CD4-positive, alpha-beta memory T cell (primary cell): ENCODE measurements at regions of chrX and their contacts with region 1.

Region 1: GRCh38 chrX:40175511-40176350 is 78.0 kb upstream of the BCOR start:
- DNase-seq: peak; percentile 81 to 85 (median 84)
- H3K4me3 ChIP-seq: peak overlapping the region; percentile 23 to 67
- H3K4me3 Mint-ChIP-seq: peak overlapping the region; percentile 84 to 94 (median 92)
- H3K27ac ChIP-seq: peak overlapping the region; percentile 84
- H3K27ac Mint-ChIP-seq: peak overlapping the region; percentile 97 to 100 (median 98)
- H3K4me1 ChIP-seq: peaks cover 29% of the 10 kb centered on the region
- H3K4me1 Mint-ChIP-seq: peaks cover 17 to 51% (median 24%) of the 10 kb centered on the region in 4 donors
- H3K27me3 ChIP-seq: no peaks in the 10 kb centered on the region
- H3K27me3 Mint-ChIP-seq: no peaks in the 10 kb centered on the region

Region 2: GRCh38 chrX:39772057-39772832 is 403.5 kb before region 1 on chrX:
- CTCF ChIA-PET with region 1: no interaction called
- POLR2A ChIA-PET with region 1: interaction called, 24 read pairs
- intact Hi-C with region 1: no loop called
- DNase-seq: peak; percentile 33 to 74 (median 41)
- H3K4me3 ChIP-seq: no peak overlapping the region
- H3K4me3 Mint-ChIP-seq: peak overlapping the region in 7 of 8 donors; percentile 46 to 85 (median 70)
- H3K27ac ChIP-seq: peak overlapping the region; percentile 48
- H3K27ac Mint-ChIP-seq: peak overlapping the region; percentile 83 to 95 (median 90)
- H3K4me1 ChIP-seq: peaks cover 64% of the 10 kb centered on the region
- H3K4me1 Mint-ChIP-seq: peaks cover 31 to 59% (median 42%) of the 10 kb centered on the region in 4 donors
- H3K27me3 ChIP-seq: no peaks in the 10 kb centered on the region
- H3K27me3 Mint-ChIP-seq: no peaks in the 10 kb centered on the region

Region 3: DNA sequence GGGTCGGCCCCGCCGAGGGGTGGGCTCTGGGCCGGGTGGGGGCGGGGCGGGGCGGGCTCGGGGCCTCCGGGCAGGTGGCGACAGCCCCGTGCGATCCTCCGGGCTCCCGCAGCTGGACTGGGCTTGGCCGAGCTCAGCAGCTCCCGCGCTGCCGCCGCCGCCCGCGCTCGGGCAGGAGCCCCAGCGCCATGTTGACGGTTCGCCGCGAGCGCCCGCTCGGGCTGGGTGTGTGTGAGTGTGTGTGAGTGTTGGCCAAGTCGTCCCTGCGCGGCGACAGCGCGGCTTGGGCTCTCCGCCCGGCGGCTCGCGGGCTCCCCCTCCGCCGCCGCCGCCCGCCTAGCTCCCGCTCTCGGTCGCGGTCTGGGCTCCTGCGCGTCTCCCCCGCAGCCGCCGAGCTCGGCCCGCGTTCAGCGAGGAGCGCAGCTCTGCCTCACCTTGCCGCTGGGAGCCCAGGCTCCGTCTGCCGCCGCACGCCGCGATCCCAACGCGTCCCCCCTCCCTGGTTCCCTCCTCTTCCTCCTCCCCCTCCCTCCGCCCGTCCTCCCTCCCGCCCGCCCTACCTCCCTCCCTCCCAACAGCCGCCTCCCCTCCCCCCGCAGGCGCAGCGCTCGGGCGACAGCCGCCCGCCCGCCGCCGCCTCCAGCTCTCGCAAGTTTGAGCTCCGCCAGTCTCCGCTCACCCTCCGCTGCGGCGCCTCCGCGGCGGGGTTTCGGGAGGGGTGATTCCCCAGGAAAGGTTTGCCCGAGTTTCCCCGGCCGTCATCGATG is 78.1 kb before region 1 on chrX and contains the start of gene BCOR:
- CTCF ChIA-PET with region 1: interaction called, 3 read pairs
- POLR2A ChIA-PET with region 1: interaction called, 323 read pairs
- intact Hi-C with region 1: loop called (anchors 1 kb)
- DNase-seq: peak; percentile 69 to 75 (median 72)
- H3K4me3 ChIP-seq: peak within 1 kb of the TSS in 1 of 2 donors; percentile 58
- H3K4me3 Mint-ChIP-seq: peak within 1 kb of the TSS; percentile 89 to 95 (median 91)
- H3K27ac ChIP-seq: peak within 1 kb of the TSS; percentile 63
- H3K27ac Mint-ChIP-seq: peak within 1 kb of the TSS; percentile 79 to 96 (median 92)
- H3K4me1 ChIP-seq: peaks cover 22% of the 10 kb centered on the region
- H3K4me1 Mint-ChIP-seq: peaks cover 9 to 38% (median 23%) of the 10 kb centered on the region in 4 donors
- H3K27me3 ChIP-seq: no peaks in the 10 kb centered on the region
- H3K27me3 Mint-ChIP-seq: no peaks in the 10 kb centered on the region
- total RNA-seq, gene BCOR: 47.1 to 48.7 TPM

Region 4: GRCh38 chrX:40153335-40154249 is 22.1 kb before region 1 on chrX:
- CTCF ChIA-PET with region 1: interaction called, 3 read pairs
- POLR2A ChIA-PET with region 1: interaction called, 25 read pairs
- intact Hi-C with region 1: no loop called
- DNase-seq: peak in 4 of 5 donors; percentile 44 to 83 (median 54)
- H3K4me3 ChIP-seq: peak overlapping the region; percentile 3 to 50
- H3K4me3 Mint-ChIP-seq: peak overlapping the region; percentile 81 to 92 (median 84)
- H3K27ac ChIP-seq: no peak overlapping the region
- H3K27ac Mint-ChIP-seq: peak overlapping the region; percentile 12 to 79 (median 60)
- H3K4me1 ChIP-seq: peaks cover under 1% of the 10 kb centered on the region
- H3K4me1 Mint-ChIP-seq: peaks cover 1 to 18% (median 11%) of the 10 kb centered on the region in 4 donors
- H3K27me3 ChIP-seq: no peaks in the 10 kb centered on the region
- H3K27me3 Mint-ChIP-seq: no peaks in the 10 kb centered on the region

Region 5: GRCh38 chrX:40266490-40267333 is 91.0 kb after region 1 on chrX:
- CTCF ChIA-PET with region 1: interaction called, 6 read pairs
- POLR2A ChIA-PET with region 1: interaction called, 4 read pairs
- intact Hi-C with region 1: loop called (anchors 2 kb)
- DNase-seq: peak; percentile 35 to 47 (median 40)
- H3K4me3 ChIP-seq: peak overlapping the region; percentile 36 to 57
- H3K4me3 Mint-ChIP-seq: peak overlapping the region; percentile 74 to 87 (median 82)
- H3K27ac ChIP-seq: no peak overlapping the region
- H3K27ac Mint-ChIP-seq: peak overlapping the region in 3 of 7 donors; percentile 27 to 82 (median 63)
- H3K4me1 ChIP-seq: peaks cover 10% of the 10 kb centered on the region
- H3K4me1 Mint-ChIP-seq: peaks cover 0 to 16% (median 3%) of the 10 kb centered on the region in 4 donors
- H3K27me3 ChIP-seq: no peaks in the 10 kb centered on the region
- H3K27me3 Mint-ChIP-seq: no peaks in the 10 kb centered on the region